Pancreas (tissue), 10 donors: ENCODE measurements at regions of chr15 and their contacts with region 1.

Region 1: DNA sequence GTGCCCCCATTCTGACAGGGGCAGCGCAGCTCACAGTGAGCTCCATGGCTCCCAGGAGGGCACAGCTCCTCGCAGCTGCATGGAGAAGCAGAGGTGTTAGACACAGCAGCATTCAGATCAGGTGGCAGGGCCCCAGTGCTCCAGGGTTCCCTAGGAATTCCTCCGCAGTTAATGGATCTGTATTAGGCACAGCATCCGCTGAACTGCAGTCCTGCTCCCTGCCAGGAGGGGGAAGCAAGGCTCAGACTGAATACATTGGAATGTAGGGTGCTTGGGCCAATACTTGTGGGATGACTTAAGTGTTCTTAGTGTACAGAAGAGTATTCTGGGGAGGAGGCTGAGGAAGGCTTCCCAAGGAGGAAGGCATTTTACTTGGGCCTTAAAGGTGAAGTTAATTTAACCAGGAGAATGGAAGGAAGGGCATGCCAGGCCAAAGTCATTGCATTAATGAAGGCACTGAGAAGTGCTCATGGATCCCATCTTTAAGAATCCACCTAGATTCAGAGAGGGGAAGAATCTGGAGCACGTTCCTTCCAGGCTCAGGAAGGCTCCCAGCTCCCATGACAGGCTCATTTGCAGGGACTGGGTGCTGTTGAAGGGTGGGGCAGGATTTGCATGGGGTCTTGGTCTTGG is 111.6 kb downstream of the RAB11A start:
- DNase-seq: peak in 5 of 6 donors; percentile 45 to 82 (median 67)
- ATAC-seq: peak; percentile 78 to 92 (median 90)
- H3K4me3 ChIP-seq: no peak overlapping the region
- H3K27ac ChIP-seq: no peak overlapping the region
- H3K4me1 ChIP-seq: peaks cover 0 to 4% (median 0%) of the 10 kb centered on the region in 3 donors
- H3K27me3 ChIP-seq: no peaks in the 10 kb centered on the region
- CTCF ChIP-seq: peak; percentile 57 to 67 (median 62)

Region 2: GRCh38 chr15:66188464-66188863 is 207.5 kb after region 1 on chr15:
- intact Hi-C with region 1: loop called in 2 of 3 experiments (anchors 10 kb)
- DNase-seq: peak in 2 of 6 donors; percentile 7 to 24
- ATAC-seq: peak; percentile 31 to 88 (median 85)
- H3K4me3 ChIP-seq: no peak overlapping the region
- H3K27ac ChIP-seq: no peak overlapping the region
- H3K4me1 ChIP-seq: no peaks in the 10 kb centered on the region
- H3K27me3 ChIP-seq: no peaks in the 10 kb centered on the region
- CTCF ChIP-seq: no peak

Region 3: GRCh38 chr15:66196602-66197001 is 215.7 kb after region 1 on chr15:
- intact Hi-C with region 1: loop called in 1 of 3 experiments (anchors 10 kb)
- DNase-seq: no peak
- ATAC-seq: no peak
- H3K4me3 ChIP-seq: no peak overlapping the region
- H3K27ac ChIP-seq: no peak overlapping the region
- H3K4me1 ChIP-seq: no peaks in the 10 kb centered on the region
- H3K27me3 ChIP-seq: no peaks in the 10 kb centered on the region
- CTCF ChIP-seq: no peak

Region 4: DNA sequence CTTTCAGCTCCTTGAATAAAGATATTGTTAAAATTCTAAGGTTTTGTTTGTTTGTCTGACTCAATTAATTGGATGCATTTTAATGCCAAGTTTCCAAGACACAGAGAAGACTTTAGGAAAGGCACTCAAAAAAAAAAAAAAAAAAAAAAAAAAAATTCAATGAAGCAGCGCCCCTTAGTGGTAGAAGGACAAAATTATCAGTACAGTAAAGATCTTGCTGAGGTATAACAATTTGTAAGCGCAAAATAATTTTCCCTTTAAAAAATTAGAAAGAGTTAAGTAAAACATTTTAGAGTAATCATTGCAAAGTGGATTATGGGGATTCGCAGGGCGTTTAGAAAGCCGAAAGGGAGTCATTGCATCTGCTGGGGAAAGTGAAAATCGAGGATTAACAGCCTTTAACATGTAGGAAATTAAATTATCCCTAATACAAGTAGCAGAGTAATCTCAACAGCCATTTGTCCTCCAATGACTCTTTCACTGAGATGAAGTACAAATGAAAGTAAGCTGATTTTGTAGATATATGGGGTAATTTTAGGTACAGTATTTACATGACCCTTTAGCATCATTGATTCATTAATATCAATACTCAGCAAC is 306.6 kb after region 1 on chr15:
- intact Hi-C with region 1: loop called in 1 of 3 experiments (anchors 10 kb)
- DNase-seq: no peak
- ATAC-seq: peak in 3 of 4 donors; percentile 46 to 58 (median 54)
- H3K4me3 ChIP-seq: no peak overlapping the region
- H3K27ac ChIP-seq: no peak overlapping the region
- H3K4me1 ChIP-seq: peaks cover 0 to 9% (median 8%) of the 10 kb centered on the region in 3 donors
- H3K27me3 ChIP-seq: no peaks in the 10 kb centered on the region
- CTCF ChIP-seq: peak in 3 of 4 donors; percentile 11 to 57 (median 57)